Posterior cingulate gyrus (tissue), 11 donors: ENCODE measurements at regions of chr10 and their contacts with region 1.

Region 1: GRCh38 chr10:113000876-113001598 is 51.0 kb downstream of the TCF7L2 start:
- DNase-seq: no peak

Region 2: GRCh38 chr10:112955582-112956421 is 45.2 kb before region 1 on chr10:
- intact Hi-C with region 1: loop called (anchors 5 kb)
- DNase-seq: no peak

Region 3: GRCh38 chr10:113027574-113028455 is 26.8 kb after region 1 on chr10:
- intact Hi-C with region 1: no loop called
- DNase-seq: no peak

Region 4: GRCh38 chr10:113045147-113046055 is 44.4 kb after region 1 on chr10:
- intact Hi-C with region 1: no loop called
- DNase-seq: no peak

Region 5: GRCh38 chr10:113058523-113058961 is 57.5 kb after region 1 on chr10:
- intact Hi-C with region 1: loop called (anchors 5 kb)
- DNase-seq: no peak